B cell (primary cell): ENCODE measurements at regions of chr10 and their contacts with region 1.

Region 1: DNA sequence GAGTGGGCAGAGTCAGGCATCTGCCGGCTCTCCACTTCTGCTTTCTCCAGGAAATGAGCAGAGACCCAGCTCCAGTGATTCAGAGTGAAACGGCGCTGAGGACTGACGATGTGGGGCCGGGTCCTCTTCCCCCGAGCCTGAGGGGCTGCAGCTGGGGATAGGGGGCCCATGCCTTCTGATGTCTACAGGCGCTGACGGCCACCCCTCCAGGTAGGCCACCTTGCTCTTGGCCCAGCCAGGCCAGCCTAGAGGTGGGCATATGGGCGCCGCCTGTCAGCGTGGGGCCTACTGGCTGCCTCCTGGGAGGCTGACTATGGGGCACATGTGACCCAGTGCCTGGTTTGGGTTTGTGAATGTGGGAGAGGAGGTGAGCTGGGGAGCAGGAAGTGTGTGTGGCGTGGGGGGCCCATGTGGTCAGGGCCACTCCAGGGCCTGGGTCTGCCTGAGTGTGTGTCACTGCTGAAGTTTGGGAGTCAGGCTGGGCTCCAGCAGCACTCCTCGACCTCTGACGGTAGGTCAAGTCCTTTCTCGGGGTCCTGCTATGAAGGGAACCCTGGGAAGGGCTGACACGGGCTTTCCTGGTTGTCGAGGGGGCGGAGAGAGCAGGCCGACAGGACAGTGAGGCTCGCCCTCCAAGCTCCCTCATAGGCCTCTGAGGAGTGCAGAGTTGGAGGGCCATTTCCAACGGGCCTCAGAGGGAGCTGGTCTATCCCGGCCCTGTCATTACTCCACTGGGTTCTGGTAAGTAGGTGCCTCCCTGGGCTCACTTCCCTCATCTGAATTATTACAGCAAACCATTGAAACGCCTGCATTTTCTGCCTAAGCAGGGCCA is at the start of gene WDFY4:
- DNase-seq: peak; percentile 85
- ATAC-seq: peak; percentile 74
- H3K4me3 ChIP-seq: peak within 1 kb of the TSS; percentile 73 to 89 (median 86)
- H3K4me3 Mint-ChIP-seq: peak within 1 kb of the TSS; percentile 94
- H3K27ac ChIP-seq: peak within 1 kb of the TSS; percentile 99
- H3K27ac Mint-ChIP-seq: peak within 1 kb of the TSS; percentile 97
- H3K4me1 ChIP-seq: peaks cover 64 to 77% of the 10 kb centered on the region in 2 donors
- H3K4me1 Mint-ChIP-seq: peaks cover 66% of the 10 kb centered on the region
- H3K27me3 ChIP-seq: no peaks in the 10 kb centered on the region
- H3K27me3 Mint-ChIP-seq: no peaks in the 10 kb centered on the region
- CTCF ChIP-seq: no peak
- total RNA-seq, gene WDFY4: 560 and 570 TPM in 2 replicates

Region 2: DNA sequence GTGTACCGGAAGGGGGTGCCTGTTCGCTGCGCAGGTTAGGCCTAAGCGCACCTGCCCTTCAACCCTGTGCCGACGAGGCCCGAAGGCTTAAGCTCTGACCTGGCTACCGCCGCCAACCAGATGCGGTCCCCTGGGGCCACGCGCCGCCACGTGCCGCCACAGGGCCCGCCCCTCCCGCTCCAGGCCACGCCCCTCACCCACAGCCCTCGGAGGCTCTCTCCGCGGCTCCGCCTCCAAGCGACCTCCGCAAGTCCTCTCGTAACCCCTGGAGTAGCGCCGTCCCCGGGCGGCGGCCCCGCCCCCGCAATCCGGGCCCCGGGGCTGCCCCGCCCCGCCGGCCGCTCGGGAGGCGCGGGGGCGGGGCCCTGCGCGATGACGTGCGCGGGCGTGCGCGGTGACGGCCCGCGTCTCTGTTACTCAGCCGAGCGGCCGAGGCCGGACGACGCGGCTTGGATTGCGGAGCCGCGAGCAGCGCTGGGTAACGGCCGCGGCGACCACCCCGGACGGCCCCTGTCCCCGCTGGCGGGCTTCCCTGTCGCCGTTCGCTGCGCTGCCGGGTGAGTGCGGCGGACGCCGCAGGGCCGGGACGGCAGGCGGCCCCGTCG is 378.6 kb before region 1 on chr10 and contains the start of gene MAPK8:
- CTCF ChIA-PET with region 1: no interaction called
- POLR2A ChIA-PET with region 1: no interaction called
- intact Hi-C with region 1: loop called (anchors 2 kb)
- DNase-seq: peak; percentile 97
- ATAC-seq: peak; percentile 90
- H3K4me3 ChIP-seq: peak within 1 kb of the TSS; percentile 48 to 79 (median 71)
- H3K4me3 Mint-ChIP-seq: peak within 1 kb of the TSS; percentile 84
- H3K27ac ChIP-seq: peak within 1 kb of the TSS; percentile 54 to 89
- H3K27ac Mint-ChIP-seq: peak within 1 kb of the TSS; percentile 84
- H3K4me1 ChIP-seq: peaks cover 6 to 23% of the 10 kb centered on the region in 2 donors
- H3K4me1 Mint-ChIP-seq: peaks cover 27% of the 10 kb centered on the region
- H3K27me3 ChIP-seq: no peaks in the 10 kb centered on the region
- H3K27me3 Mint-ChIP-seq: no peaks in the 10 kb centered on the region
- CTCF ChIP-seq: no peak
- total RNA-seq, gene MAPK8: 40.0 and 51.5 TPM in 2 replicates

Region 3: GRCh38 chr10:48670978-48671913 is 13.8 kb before region 1 on chr10:
- CTCF ChIA-PET with region 1: interaction called, 53 read pairs
- POLR2A ChIA-PET with region 1: interaction called, 263 read pairs
- intact Hi-C with region 1: loop called (anchors 1 kb)
- DNase-seq: peak; percentile 95
- ATAC-seq: peak; percentile 70
- H3K4me3 ChIP-seq: peak overlapping the region in 4 of 5 experiments; percentile 13 to 61 (median 38)
- H3K4me3 Mint-ChIP-seq: peak overlapping the region; percentile 91
- H3K27ac ChIP-seq: peak overlapping the region; percentile 99 to 100
- H3K27ac Mint-ChIP-seq: peak overlapping the region; percentile 97
- H3K4me1 ChIP-seq: peaks cover 70 to 75% of the 10 kb centered on the region in 2 donors
- H3K4me1 Mint-ChIP-seq: peaks cover 66% of the 10 kb centered on the region
- H3K27me3 ChIP-seq: no peaks in the 10 kb centered on the region
- H3K27me3 Mint-ChIP-seq: no peaks in the 10 kb centered on the region
- CTCF ChIP-seq: no peak

Region 4: GRCh38 chr10:48701139-48701901 is 16.3 kb after region 1 on chr10:
- CTCF ChIA-PET with region 1: interaction called, 24 read pairs
- POLR2A ChIA-PET with region 1: interaction called, 10 read pairs
- intact Hi-C with region 1: loop called (anchors 1 kb)
- DNase-seq: peak; percentile 62
- ATAC-seq: peak; percentile 37
- H3K4me3 ChIP-seq: no peak overlapping the region
- H3K4me3 Mint-ChIP-seq: peak overlapping the region; percentile 58
- H3K27ac ChIP-seq: peak overlapping the region in 1 of 2 donors; percentile 66
- H3K27ac Mint-ChIP-seq: peak overlapping the region; percentile 88
- H3K4me1 ChIP-seq: peaks cover 87 to 98% of the 10 kb centered on the region in 2 donors
- H3K4me1 Mint-ChIP-seq: peaks cover 96% of the 10 kb centered on the region
- H3K27me3 ChIP-seq: no peaks in the 10 kb centered on the region
- H3K27me3 Mint-ChIP-seq: no peaks in the 10 kb centered on the region
- CTCF ChIP-seq: peak; percentile 70

Region 5: DNA sequence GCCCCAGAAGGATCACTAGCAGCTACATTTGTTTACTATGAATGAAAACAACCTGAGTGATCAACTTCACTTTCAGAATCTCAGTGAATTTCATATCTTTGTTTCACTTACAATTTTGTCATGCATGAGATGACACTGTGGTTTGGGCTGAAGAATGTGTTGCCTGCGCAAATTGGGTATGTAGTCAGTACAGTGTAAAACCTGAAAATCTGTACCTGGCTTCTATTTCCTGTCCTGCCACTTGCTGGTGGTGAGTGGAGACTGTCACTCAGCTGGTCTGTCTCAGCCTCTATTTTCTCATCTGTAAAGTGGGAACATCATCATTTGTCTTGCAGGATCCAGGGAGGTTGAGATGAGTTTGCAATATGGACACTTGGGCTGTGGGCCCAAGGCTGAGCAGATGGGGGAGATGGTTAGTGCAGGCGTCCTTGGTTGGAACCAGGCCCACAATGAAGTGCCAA is 117.6 kb after region 1 on chr10:
- CTCF ChIA-PET with region 1: interaction called, 7 read pairs
- POLR2A ChIA-PET with region 1: interaction called, 5 read pairs
- intact Hi-C with region 1: loop called (anchors 5 kb)
- DNase-seq: peak; percentile 80
- ATAC-seq: peak; percentile 79
- H3K4me3 ChIP-seq: no peak overlapping the region
- H3K4me3 Mint-ChIP-seq: peak overlapping the region; percentile 81
- H3K27ac ChIP-seq: peak overlapping the region; percentile 45 to 95
- H3K27ac Mint-ChIP-seq: peak overlapping the region; percentile 97
- H3K4me1 ChIP-seq: peaks cover 56 to 63% of the 10 kb centered on the region in 2 donors
- H3K4me1 Mint-ChIP-seq: peaks cover 80% of the 10 kb centered on the region
- H3K27me3 ChIP-seq: no peaks in the 10 kb centered on the region
- H3K27me3 Mint-ChIP-seq: no peaks in the 10 kb centered on the region
- CTCF ChIP-seq: no peak

Region 6: GRCh38 chr10:49194212-49194920 is 509.4 kb after region 1 on chr10:
- CTCF ChIA-PET with region 1: no interaction called
- POLR2A ChIA-PET with region 1: no interaction called
- intact Hi-C with region 1: loop called (anchors 10 kb)
- DNase-seq: no peak
- ATAC-seq: no peak
- H3K4me3 ChIP-seq: peak overlapping the region in 1 of 5 experiments; percentile 26
- H3K4me3 Mint-ChIP-seq: peak overlapping the region; percentile 60
- H3K27ac ChIP-seq: peak overlapping the region in 1 of 2 donors; percentile 68
- H3K27ac Mint-ChIP-seq: peak overlapping the region; percentile 91
- H3K4me1 ChIP-seq: peaks cover 29 to 34% of the 10 kb centered on the region in 2 donors
- H3K4me1 Mint-ChIP-seq: peaks cover 39% of the 10 kb centered on the region
- H3K27me3 ChIP-seq: peaks cover 0 to 5% (median 2%) of the 10 kb centered on the region in 4 experiments
- H3K27me3 Mint-ChIP-seq: peaks cover 8% of the 10 kb centered on the region
- CTCF ChIP-seq: no peak